Posterior cingulate gyrus (tissue), 11 donors: ENCODE measurements at regions of chr20 and their contacts with region 1.

Region 1: GRCh38 chr20:35207950-35208611 is 18.4 kb upstream of the MMP24 start:
- DNase-seq: peak in 8 of 10 donors; percentile 26 to 91 (median 80)

Region 2: GRCh38 chr20:34834459-34834893 is 373.6 kb before region 1 on chr20:
- intact Hi-C with region 1: loop called (anchors 5 kb)
- DNase-seq: no peak

Region 3: DNA sequence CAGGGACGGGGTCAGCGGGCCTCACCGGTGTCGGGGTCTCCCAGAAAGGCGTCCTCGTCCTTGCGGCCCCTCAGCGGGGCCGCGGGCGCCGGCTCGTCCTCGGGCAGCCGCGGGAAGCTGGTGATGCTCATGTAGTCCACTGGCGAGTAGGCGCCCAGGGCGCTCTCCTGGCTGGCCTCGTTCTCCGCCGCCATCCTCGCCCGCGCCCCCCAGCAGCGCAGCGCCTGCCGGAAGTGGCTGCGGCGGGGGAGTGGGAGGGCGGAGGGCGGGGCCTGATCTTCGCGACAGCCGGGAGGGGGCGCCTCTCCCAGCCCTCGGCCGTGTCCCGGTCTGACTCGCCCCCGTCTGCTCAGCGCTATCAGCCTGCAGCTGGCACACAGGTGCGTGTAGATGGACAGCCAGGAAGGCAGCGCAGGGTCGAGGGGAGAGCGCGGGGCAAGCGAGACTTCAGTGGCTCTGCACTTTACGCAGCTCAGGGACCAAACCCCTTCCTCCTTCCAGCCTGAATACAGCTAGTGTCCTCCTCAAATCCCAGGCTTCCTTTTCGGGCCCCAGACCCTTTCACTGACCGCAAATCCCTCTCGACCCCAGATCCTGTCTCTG is 335.4 kb before region 1 on chr20 and contains the start of gene GGT7:
- intact Hi-C with region 1: loop called (anchors 5 kb)
- DNase-seq: peak; percentile 79 to 97 (median 86)

Region 4: GRCh38 chr20:35146920-35147574 is 61.0 kb before region 1 on chr20 and contains the start of gene EDEM2:
- intact Hi-C with region 1: loop called (anchors 5 kb)
- DNase-seq: peak; percentile 92 to 99 (median 96)